Posterior cingulate gyrus (tissue), 11 donors: ENCODE measurements at regions of chr12 and their contacts with region 1.

Region 1: DNA sequence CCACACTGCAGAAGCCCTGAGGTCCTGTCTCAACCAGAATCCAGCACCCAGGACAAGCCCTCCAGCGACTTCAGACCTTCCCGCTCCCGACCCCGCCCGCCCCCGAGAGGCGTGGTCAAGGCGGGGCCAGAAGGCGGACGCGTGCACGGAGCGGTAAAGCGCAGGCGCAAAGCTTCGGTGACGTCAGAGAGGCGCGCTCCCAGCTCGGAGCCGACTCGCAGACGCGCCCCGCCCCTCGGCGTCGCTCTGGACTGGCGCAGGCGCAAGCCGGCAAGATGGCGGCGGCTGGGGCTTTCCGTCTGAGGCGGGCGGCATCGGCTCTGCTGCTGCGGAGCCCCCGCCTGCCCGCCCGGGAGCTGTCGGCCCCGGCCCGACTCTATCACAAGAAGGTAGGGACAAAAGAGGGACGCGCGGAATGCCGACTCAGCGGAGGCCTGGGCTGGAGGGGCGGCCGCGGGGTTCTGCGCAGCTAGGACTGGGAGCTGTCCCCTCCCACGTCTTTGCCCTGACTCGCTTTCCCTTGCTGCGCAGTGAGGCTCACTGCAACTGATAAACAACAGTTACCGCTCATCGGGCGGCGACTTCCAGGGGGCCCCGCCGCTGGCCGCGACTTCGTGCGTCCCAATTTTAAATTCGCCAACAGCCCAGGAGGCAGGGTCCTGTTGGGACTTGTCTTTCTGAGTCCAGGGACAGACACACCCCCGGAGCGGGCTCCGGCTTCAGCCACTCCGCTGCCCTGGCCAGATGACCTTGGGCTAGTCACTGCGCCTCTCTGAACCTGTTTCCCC is at the start of gene ISCU:
- DNase-seq: peak; percentile 96 to 100 (median 98)

Region 2: DNA sequence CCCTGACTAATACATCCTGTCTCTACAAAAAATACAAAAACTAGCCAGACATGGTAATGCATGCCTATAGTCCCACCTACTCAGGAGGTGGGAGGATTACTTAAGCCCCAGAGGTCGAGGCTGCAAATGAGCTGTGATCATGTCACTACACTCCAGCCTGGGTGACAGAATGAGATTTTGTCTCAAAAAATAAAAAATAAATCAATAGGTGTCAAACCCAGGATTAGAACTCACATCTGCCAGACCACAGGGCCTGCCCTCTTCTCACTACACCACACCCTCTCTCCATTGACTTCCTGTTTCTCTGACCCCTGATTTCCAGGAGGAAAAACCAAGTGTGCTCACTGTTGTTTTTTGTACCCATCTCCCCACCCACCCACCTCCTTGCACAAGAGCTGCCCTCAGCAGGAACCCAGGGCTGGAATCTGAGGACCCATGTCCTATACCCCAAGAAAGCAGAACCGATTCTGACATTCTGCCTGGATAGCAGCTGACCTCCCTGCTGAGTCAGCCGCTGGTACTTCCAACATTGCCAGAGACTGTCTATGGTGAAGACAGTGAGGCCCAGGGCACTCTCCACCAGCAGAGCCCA is 229.7 kb before region 1 on chr12:
- intact Hi-C with region 1: no loop called
- DNase-seq: no peak

Region 3: GRCh38 chr12:108618079-108618952 is 55.8 kb after region 1 on chr12:
- intact Hi-C with region 1: loop called (anchors 1 kb)
- DNase-seq: peak; percentile 61 to 96 (median 81)

Region 4: GRCh38 chr12:108950991-108951739 is 388.6 kb after region 1 on chr12:
- intact Hi-C with region 1: loop called (anchors 2 kb)
- DNase-seq: peak; percentile 38 to 93 (median 68)